ENCODE measurements at regions of chr1 and their contacts with region 1.

Region 1: DNA sequence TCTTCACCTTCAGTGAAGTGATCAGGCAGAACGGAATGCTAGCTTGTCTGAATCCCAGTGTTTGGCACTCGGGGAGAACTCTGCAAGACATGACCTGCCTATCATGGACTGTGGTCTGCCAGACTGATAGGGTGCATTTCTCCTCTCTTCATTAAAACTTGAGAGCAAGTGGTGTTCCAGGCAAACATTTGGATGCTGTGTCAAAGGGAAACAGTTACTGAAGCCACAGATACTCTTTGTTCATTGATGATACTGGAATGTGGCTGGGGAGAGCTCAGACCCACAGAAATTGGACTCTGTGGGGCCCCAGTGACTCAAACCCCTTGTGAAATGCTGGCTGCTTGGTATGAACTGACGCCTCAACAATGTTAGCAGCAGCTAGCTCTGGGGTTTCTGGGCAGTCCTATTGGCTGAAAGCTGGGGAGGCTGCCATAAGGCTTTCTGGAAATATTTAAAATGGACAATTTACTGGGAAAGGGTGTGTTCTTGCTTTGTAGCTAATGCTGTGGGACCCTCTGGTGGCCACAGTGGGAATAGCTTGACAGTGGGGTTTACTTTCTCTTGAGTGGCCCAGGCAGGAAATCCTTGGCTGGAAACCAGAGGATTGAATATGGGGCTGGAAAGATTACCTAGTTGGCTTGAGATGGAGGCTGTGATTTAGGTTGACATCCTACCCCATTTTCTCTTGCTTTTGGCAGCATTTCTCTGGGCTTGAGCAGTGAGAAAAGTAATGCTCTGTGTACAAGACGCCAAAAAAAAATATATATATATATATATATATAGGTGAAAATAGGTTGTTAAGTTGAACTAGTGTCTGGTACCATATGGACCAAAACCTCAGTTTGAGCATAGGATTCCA is 8.0 kb upstream of the S100A10 start:
- DNase-seq: peak; percentile 68
- H3K4me3 ChIP-seq: no peak overlapping the region
- H3K27ac ChIP-seq: no peak overlapping the region
- H3K4me1 ChIP-seq: no peaks in the 10 kb centered on the region
- CTCF ChIP-seq: peak; percentile 95

Region 2: GRCh38 chr1:151811147-151811546 is 190.5 kb before region 1 on chr1:
- CTCF ChIA-PET with region 1: no interaction called
- POLR2A ChIA-PET with region 1: no interaction called
- intact Hi-C with region 1: no loop called
- DNase-seq: no peak
- H3K4me3 ChIP-seq: no peak overlapping the region
- H3K27ac ChIP-seq: no peak overlapping the region
- H3K4me1 ChIP-seq: no peaks in the 10 kb centered on the region
- CTCF ChIP-seq: no peak

Region 3: GRCh38 chr1:151888972-151889570 is 112.5 kb before region 1 on chr1:
- CTCF ChIA-PET with region 1: no interaction called
- POLR2A ChIA-PET with region 1: interaction called, 3 read pairs
- intact Hi-C with region 1: loop called (anchors 1 kb)
- DNase-seq: peak; percentile 44
- H3K4me3 ChIP-seq: no peak overlapping the region
- H3K27ac ChIP-seq: no peak overlapping the region
- H3K4me1 ChIP-seq: peaks cover 4% of the 10 kb centered on the region
- CTCF ChIP-seq: peak; percentile 80

Region 4: DNA sequence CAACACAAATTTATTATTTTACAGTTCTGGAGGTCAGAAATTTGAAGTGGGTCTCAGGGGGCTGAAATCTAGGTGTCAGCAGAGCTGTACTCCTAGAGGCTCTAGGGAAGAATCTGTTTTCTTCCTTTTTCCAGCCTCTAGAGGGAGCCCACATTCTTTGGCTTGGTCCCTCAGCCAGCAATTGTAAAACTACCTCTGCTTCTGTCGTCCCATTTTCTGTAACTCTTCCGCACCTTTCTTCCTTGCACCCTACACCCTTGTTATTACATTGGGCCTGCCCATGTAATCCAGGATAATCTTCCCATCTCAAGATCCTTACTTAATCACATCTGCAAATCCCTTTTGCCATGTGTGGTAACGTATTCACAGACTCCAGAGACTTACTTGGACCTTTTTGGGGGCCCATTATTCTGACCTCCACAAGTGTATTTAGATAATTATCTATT is 67.5 kb before region 1 on chr1:
- CTCF ChIA-PET with region 1: interaction called, 4 read pairs
- POLR2A ChIA-PET with region 1: no interaction called
- intact Hi-C with region 1: loop called (anchors 1 kb)
- DNase-seq: peak; percentile 64
- H3K4me3 ChIP-seq: no peak overlapping the region
- H3K27ac ChIP-seq: no peak overlapping the region
- H3K4me1 ChIP-seq: peaks cover 6% of the 10 kb centered on the region
- CTCF ChIP-seq: peak; percentile 90

Region 5: GRCh38 chr1:151968058-151968457 is 33.6 kb before region 1 on chr1:
- CTCF ChIA-PET with region 1: no interaction called
- POLR2A ChIA-PET with region 1: no interaction called
- intact Hi-C with region 1: loop called (anchors 1 kb)
- DNase-seq: peak; percentile 44
- H3K4me3 ChIP-seq: no peak overlapping the region
- H3K27ac ChIP-seq: no peak overlapping the region
- H3K4me1 ChIP-seq: no peaks in the 10 kb centered on the region
- CTCF ChIP-seq: peak; percentile 77

Region 6: GRCh38 chr1:152252157-152252556 is 250.5 kb after region 1 on chr1:
- CTCF ChIA-PET with region 1: no interaction called
- POLR2A ChIA-PET with region 1: no interaction called
- intact Hi-C with region 1: no loop called
- DNase-seq: no peak
- H3K4me3 ChIP-seq: no peak overlapping the region
- H3K27ac ChIP-seq: no peak overlapping the region
- H3K4me1 ChIP-seq: no peaks in the 10 kb centered on the region
- CTCF ChIP-seq: no peak

Measured in OCI-LY7 (cell line).